ENCODE measurements at regions of chr4 and their contacts with region 1.

Region 1: GRCh38 chr4:176195184-176195978 is at the start of gene SPATA4:
- DNase-seq: peak; percentile 98
- H3K4me3 Mint-ChIP-seq: peak within 1 kb of the TSS; percentile 79
- H3K27ac Mint-ChIP-seq: peak within 1 kb of the TSS; percentile 73
- H3K4me1 Mint-ChIP-seq: peaks cover 17% of the 10 kb centered on the region
- H3K27me3 Mint-ChIP-seq: peaks cover 39% of the 10 kb centered on the region
- total RNA-seq, gene SPATA4: 0.12 TPM in 1 of 2 replicates, not detected in the other

Region 2: GRCh38 chr4:176065435-176066291 is 129.7 kb before region 1 on chr4 and contains the start of gene WDR17:
- intact Hi-C with region 1: loop called (anchors 1 kb)
- DNase-seq: peak; percentile 92
- H3K4me3 Mint-ChIP-seq: peak within 1 kb of the TSS; percentile 90
- H3K27ac Mint-ChIP-seq: peak within 1 kb of the TSS; percentile 45
- H3K4me1 Mint-ChIP-seq: peaks cover 11% of the 10 kb centered on the region
- H3K27me3 Mint-ChIP-seq: peaks cover 21% of the 10 kb centered on the region
- total RNA-seq, gene WDR17: 1.7 and 2.1 TPM in 2 replicates

Region 3: DNA sequence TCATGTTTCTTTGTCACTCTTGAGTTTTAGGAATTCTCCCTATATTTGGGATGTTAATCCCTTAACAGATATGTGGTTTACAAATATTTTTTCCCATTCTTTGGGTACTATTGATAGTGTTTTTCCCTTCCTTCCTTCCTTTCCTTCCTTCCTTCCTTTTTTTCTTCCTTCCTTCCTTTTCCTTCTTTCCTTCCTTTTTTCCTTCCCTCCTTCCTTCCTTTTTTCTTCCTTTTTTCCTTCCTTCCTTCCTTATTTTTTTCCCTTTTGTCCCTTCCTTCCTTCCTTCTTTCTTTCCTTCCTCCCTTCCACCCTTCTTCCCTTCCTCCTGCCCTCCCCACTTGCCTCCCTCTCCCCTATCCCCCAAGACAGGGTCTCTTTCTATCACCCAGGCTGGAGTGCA is 87.7 kb before region 1 on chr4:
- intact Hi-C with region 1: no loop called
- DNase-seq: no peak
- H3K4me3 Mint-ChIP-seq: no peak overlapping the region
- H3K27ac Mint-ChIP-seq: no peak overlapping the region
- H3K4me1 Mint-ChIP-seq: no peaks in the 10 kb centered on the region
- H3K27me3 Mint-ChIP-seq: no peaks in the 10 kb centered on the region

Region 4: GRCh38 chr4:176123710-176124407 is 71.5 kb before region 1 on chr4:
- intact Hi-C with region 1: loop called (anchors 2 kb)
- DNase-seq: no peak
- H3K4me3 Mint-ChIP-seq: no peak overlapping the region
- H3K27ac Mint-ChIP-seq: no peak overlapping the region
- H3K4me1 Mint-ChIP-seq: peaks cover 10% of the 10 kb centered on the region
- H3K27me3 Mint-ChIP-seq: no peaks in the 10 kb centered on the region

Region 5: DNA sequence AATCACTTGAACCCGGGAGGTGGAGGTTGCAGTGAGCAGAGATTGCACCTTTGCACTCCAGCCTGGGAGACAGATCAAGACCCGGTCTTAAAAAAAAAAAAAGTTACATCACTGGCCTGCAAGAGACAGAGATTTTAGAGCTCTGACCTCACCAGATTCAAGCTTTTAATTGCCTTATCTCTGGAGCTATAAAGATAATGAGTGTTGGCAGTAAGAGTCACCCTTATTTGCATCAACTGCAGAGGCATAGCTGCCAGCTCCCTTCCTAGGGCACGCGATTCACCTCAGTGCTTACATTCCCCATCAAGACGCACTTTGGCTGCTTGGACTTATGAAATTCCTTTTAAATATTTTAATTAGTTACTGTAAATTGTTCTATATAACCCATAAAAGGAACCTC is 12.5 kb after region 1 on chr4:
- intact Hi-C with region 1: no loop called
- DNase-seq: no peak
- H3K4me3 Mint-ChIP-seq: no peak overlapping the region
- H3K27ac Mint-ChIP-seq: no peak overlapping the region
- H3K4me1 Mint-ChIP-seq: no peaks in the 10 kb centered on the region
- H3K27me3 Mint-ChIP-seq: peaks cover 14% of the 10 kb centered on the region

Region 6: GRCh38 chr4:176319704-176320339 is 124.4 kb after region 1 on chr4 and contains the start of gene SPCS3:
- intact Hi-C with region 1: loop called (anchors 1 kb)
- DNase-seq: peak; percentile 99
- H3K4me3 Mint-ChIP-seq: peak within 1 kb of the TSS; percentile 85
- H3K27ac Mint-ChIP-seq: peak within 1 kb of the TSS; percentile 92
- H3K4me1 Mint-ChIP-seq: peaks cover 28% of the 10 kb centered on the region
- H3K27me3 Mint-ChIP-seq: no peaks in the 10 kb centered on the region
- total RNA-seq, gene SPCS3: 186 and 200 TPM in 2 replicates

Region 7: GRCh38 chr4:176492646-176493302 is 297.4 kb after region 1 on chr4:
- intact Hi-C with region 1: loop called (anchors 10 kb)
- DNase-seq: no peak
- H3K4me3 Mint-ChIP-seq: peak overlapping the region; percentile 51
- H3K27ac Mint-ChIP-seq: peak overlapping the region; percentile 74
- H3K4me1 Mint-ChIP-seq: peaks cover 11% of the 10 kb centered on the region
- H3K27me3 Mint-ChIP-seq: no peaks in the 10 kb centered on the region

Region 8: DNA sequence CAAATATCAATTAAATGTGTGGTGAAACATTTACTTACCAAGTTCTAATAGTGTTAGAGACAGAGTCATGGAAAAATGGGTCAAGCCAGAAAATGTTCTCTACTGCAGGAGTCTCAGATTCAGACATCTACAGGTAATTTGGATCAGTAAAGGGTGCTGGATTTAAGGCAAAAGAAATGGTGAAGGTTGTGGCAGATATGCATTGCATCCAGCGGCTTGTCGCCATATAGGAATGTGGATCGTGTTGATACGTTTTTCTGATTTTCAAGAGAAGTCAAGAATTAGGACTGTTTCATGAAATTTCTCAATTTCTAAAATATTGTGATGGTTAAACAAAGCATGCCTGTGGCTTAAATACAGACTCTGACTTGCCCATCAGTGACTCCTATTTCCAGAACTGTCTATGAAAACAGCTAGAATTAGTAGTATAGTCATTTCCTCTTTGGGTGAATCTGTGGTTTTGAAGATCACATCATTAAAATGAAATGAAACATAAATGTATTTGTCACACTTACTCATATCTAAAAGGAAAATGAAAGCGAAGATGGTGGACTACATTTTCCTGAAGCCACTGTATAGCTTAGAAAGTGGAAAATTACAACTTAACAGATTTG is 707.4 kb after region 1 on chr4:
- intact Hi-C with region 1: loop called (anchors 5 kb)
- DNase-seq: peak; percentile 60
- H3K4me3 Mint-ChIP-seq: peak overlapping the region; percentile 34
- H3K27ac Mint-ChIP-seq: peak overlapping the region; percentile 49
- H3K4me1 Mint-ChIP-seq: peaks cover 10% of the 10 kb centered on the region
- H3K27me3 Mint-ChIP-seq: peaks cover 8% of the 10 kb centered on the region

Region 9: DNA sequence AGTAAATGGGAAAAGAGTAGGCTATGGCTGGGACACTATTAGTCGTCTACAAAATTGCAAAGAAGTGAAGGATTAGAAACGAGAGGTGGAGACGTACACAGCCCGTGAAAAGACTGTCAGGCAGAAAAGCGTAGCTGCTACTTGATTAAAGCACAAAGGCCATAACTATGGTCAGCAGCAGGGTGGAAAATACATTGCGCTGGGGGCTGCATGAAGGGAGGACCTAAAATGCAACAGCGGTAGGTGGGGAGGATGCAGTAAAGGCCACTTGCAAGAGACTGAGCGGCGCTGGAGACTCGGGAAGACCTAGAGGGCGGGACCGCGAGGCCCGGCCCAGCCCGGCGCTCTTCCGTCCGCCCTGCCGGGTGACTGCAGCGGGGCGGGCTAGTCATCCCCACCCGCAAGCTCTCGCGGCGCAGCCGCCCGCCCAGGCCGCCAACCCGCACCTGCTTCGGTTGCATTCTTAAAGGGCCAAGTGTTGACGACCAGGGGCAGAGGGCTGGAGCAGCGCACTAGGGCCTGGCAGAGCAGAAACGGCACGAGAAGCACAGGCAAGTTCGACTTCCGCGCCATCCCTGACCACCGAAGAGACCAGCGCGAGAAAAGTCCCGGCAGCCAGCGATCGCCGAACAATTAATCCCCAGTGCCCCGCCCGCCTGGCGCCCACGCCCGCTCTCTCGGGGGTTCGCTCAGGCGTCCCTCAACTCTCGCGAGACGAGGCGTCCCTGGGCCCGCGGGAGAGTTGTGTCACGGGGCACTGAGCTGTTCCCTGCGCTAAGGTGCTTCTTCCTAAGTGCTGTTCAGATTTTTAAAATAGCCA is 1246.6 kb after region 1 on chr4 and contains the start of gene AGA:
- intact Hi-C with region 1: loop called (anchors 10 kb)
- DNase-seq: peak; percentile 98
- H3K4me3 Mint-ChIP-seq: peak within 1 kb of the TSS; percentile 95
- H3K27ac Mint-ChIP-seq: peak within 1 kb of the TSS; percentile 97
- H3K4me1 Mint-ChIP-seq: peaks cover 27% of the 10 kb centered on the region
- H3K27me3 Mint-ChIP-seq: no peaks in the 10 kb centered on the region
- total RNA-seq, gene AGA: 15.1 and 15.6 TPM in 2 replicates

Region 10: DNA sequence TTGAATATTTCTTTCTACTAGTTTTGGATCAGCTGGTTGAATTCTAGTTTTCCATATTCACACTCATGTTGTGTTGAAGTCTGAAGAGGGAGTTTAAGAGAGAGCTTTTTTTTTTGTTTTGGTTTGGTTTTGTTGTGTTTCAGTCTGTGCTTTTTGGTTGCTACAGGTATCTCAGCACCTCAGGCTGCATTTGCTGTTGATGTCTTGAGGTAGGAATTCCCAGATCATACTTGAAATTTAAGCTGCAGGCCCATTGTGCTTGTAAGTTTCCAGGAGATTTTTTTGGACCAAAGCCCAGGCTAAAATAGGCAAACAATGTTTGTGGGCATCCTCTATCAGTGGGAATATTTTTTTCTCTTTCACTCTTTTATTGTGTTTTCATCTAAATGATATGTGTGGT is 1437.1 kb after region 1 on chr4:
- intact Hi-C with region 1: no loop called
- DNase-seq: no peak
- H3K4me3 Mint-ChIP-seq: no peak overlapping the region
- H3K27ac Mint-ChIP-seq: no peak overlapping the region
- H3K4me1 Mint-ChIP-seq: no peaks in the 10 kb centered on the region
- H3K27me3 Mint-ChIP-seq: no peaks in the 10 kb centered on the region

Measured in activated CD4-positive, alpha-beta T cell treated with anti-CD3 and anti-CD28 coated beads, Interleukin-2, amount 10 ng/mL, durations not matched to agents 24 days and 14 days (primary cell).